ENCODE measurements at regions of chr13 and their contacts with region 1.

Region 1: DNA sequence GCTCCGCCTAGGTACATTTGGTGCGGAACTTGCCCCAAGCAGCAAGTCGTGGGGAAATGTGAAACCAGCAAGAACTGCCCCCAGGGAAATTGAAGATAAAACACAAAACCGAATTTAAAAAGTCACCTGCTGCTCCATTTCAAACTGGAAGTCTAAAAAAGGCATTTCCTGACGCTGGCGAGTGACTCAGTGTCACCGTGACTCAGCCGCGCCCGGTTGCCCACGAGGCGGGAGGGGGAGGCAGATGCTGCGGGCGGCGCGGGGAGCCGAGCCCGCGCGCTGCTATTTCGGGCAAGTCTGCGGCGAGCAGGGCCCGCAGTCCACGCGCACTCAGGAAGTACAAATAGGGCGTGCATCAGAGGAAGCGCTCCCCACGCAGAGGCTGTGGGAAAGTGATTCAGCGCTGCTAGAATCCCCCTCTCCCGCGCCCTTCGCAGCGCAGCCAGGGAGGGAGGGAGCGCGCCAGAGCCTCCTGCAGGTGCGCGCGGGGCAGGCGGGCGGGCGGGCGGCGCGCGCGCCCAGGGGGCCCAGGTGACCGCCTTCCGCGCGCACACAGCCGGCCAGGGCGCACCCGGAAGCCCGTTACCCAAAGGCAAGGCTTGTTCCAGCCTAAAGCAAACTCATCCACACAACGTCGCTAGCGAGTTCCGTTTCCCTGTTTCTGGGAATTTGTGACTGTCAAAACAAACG is 168.8 kb downstream of the COL4A1 start:
- DNase-seq: peak; percentile 82 to 94
- H3K4me3 ChIP-seq: peak overlapping the region; percentile 67
- H3K27ac ChIP-seq: peak overlapping the region; percentile 95
- H3K4me1 ChIP-seq: peaks cover 42% of the 10 kb centered on the region
- H3K27me3 ChIP-seq: no peaks in the 10 kb centered on the region
- CTCF ChIP-seq: peak; percentile 42; the same call in 1 of the 2 replicates

Region 2: DNA sequence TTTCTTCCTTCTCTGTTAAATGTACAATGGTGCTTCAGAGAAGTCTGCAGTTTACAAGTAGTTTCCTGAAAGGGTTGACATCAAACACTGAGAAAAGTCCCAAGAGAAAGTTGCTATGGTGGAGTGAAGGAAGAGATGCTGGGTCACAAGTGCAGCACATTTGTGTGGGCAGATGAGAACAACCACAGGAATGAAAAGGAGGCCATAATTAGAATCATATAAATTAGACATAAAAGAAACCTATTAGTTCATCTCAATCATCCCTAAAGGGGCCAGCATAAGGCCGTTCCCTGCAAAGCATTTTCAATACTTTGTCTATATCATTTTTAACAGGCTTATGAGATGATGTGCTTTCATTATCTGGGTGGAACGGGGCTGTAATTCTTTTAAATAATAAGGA is 711.0 kb before region 1 on chr13:
- CTCF ChIA-PET with region 1: no interaction called
- POLR2A ChIA-PET with region 1: no interaction called
- intact Hi-C with region 1: no loop called
- DNase-seq: no peak
- H3K4me3 ChIP-seq: no peak overlapping the region
- H3K27ac ChIP-seq: no peak overlapping the region
- H3K4me1 ChIP-seq: no peaks in the 10 kb centered on the region
- H3K27me3 ChIP-seq: no peaks in the 10 kb centered on the region
- CTCF ChIP-seq: no peak

Region 3: GRCh38 chr13:110150384-110151101 is 12.4 kb after region 1 on chr13:
- CTCF ChIA-PET with region 1: no interaction called
- POLR2A ChIA-PET with region 1: no interaction called
- intact Hi-C with region 1: no loop called
- DNase-seq: no peak
- H3K4me3 ChIP-seq: no peak overlapping the region
- H3K27ac ChIP-seq: no peak overlapping the region
- H3K4me1 ChIP-seq: no peaks in the 10 kb centered on the region
- H3K27me3 ChIP-seq: no peaks in the 10 kb centered on the region
- CTCF ChIP-seq: no peak

Region 4: DNA sequence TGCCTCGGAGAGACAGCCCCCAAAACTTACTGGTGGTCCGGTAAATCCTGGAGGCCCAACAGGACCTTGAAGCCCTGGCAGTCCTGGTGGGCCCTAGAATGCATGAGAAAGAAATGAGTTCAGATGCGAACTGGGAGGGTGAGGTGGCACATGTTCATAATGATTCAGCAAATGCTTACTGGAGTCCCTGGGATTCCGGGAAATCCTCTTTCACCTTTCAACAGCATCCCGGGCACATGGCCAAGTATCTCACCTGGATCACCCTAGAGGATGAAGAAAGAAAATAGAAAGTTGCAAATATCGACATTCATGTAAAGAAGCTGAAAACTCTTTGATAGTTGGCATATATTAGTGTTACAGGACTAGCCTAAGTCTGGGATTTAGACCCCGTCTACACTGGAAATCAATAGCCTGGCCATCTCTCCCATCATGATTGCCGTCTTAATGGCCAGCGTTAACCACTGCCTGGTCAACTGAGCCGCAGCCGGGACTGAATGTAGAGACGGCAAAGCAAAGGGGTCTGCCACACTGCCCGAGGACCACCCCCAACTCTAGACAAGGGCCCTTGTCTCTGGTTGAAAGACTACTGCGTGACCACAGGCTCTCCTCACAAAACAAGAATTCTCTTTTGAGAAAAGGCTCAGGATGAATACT is 71.9 kb after region 1 on chr13:
- CTCF ChIA-PET with region 1: no interaction called
- POLR2A ChIA-PET with region 1: interaction called, 4 read pairs
- intact Hi-C with region 1: loop called (anchors 5 kb)
- DNase-seq: peak; percentile 78 to 81
- H3K4me3 ChIP-seq: no peak overlapping the region
- H3K27ac ChIP-seq: peak overlapping the region; percentile 72
- H3K4me1 ChIP-seq: peaks cover 18% of the 10 kb centered on the region
- H3K27me3 ChIP-seq: no peaks in the 10 kb centered on the region
- CTCF ChIP-seq: no peak